CD8-positive, alpha-beta T cell (primary cell): ENCODE measurements at regions of chr20 and their contacts with region 1.

Region 1: GRCh38 chr20:17504898-17505635 is 26.1 kb downstream of the BFSP1 start:
- DNase-seq: peak; percentile 13 to 84 (median 48)
- ATAC-seq: peak; percentile 72
- H3K4me3 ChIP-seq: peak overlapping the region; percentile 56 to 61
- H3K4me3 Mint-ChIP-seq: peak overlapping the region; percentile 89
- H3K27ac ChIP-seq: peak overlapping the region in 1 of 2 experiments; percentile 64
- H3K27ac Mint-ChIP-seq: peak overlapping the region; percentile 89
- H3K4me1 ChIP-seq: peaks cover 24% of the 10 kb centered on the region
- H3K4me1 Mint-ChIP-seq: peaks cover 36% of the 10 kb centered on the region
- H3K27me3 ChIP-seq: no peaks in the 10 kb centered on the region
- H3K27me3 Mint-ChIP-seq: no peaks in the 10 kb centered on the region
- CTCF ChIP-seq: peak; percentile 84

Region 2: DNA sequence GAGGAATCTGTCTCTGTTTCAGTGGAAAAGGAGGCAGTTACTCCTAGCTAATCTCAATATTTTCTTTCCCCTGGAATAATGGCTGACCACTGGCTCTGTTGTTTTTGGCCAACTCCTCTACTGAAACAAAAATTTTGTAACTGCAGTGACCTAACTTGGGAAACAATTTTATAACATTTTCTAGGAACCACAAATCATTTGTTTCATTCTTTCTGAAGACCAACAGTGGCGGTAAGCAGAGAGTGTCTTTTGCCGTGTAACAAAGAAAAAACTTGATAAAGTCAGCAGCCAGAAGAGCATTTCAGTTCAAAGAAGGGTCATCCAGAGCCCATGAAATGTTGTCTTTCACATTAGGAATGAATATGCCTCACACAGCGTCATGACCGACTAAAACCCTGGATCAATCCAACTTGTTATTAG is 37.9 kb after region 1 on chr20:
- CTCF ChIA-PET with region 1: interaction called, 10 read pairs
- POLR2A ChIA-PET with region 1: no interaction called
- intact Hi-C with region 1: no loop called
- DNase-seq: no peak
- ATAC-seq: no peak
- H3K4me3 ChIP-seq: no peak overlapping the region
- H3K4me3 Mint-ChIP-seq: no peak overlapping the region
- H3K27ac ChIP-seq: no peak overlapping the region
- H3K27ac Mint-ChIP-seq: no peak overlapping the region
- H3K4me1 ChIP-seq: no peaks in the 10 kb centered on the region
- H3K4me1 Mint-ChIP-seq: no peaks in the 10 kb centered on the region
- H3K27me3 ChIP-seq: no peaks in the 10 kb centered on the region
- H3K27me3 Mint-ChIP-seq: peaks cover 16% of the 10 kb centered on the region
- CTCF ChIP-seq: no peak

Region 3: DNA sequence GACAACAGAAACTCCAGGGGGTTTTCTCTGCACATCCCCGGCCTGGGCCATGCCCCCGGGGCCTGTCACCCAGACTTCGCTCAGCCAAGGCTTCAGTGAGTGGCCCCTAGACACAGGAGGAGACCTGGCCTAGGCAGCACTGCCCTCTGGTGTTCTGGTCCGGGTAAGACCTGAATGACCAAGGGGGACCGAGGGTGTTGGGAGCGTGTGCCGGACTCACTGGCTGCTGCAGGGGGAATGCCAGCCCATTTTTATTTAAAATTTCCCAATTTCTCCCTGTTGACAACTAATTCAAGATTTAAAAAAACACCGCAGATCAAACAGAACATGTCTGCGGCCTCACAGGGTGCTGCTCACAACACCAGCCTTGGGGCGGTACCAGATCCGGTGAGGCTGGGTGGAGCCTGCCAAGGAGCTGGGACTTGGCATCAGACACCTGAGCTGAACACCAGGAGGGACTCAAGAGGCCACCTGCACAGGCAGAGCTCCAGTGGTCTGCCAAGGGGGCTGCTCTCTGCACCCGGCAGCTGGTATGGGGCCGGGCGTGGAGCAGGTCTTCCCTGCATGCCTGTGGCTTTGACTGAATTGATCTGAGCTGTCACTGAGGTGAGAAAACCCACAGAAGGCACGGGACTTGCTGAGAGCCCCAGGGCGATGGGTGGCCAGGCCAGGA is 112.6 kb after region 1 on chr20:
- CTCF ChIA-PET with region 1: interaction called, 16 read pairs
- POLR2A ChIA-PET with region 1: no interaction called
- intact Hi-C with region 1: loop called (anchors 1 kb)
- DNase-seq: peak in 7 of 9 experiments; percentile 25 to 67 (median 58)
- ATAC-seq: peak; percentile 55
- H3K4me3 ChIP-seq: no peak overlapping the region
- H3K4me3 Mint-ChIP-seq: no peak overlapping the region
- H3K27ac ChIP-seq: no peak overlapping the region
- H3K27ac Mint-ChIP-seq: no peak overlapping the region
- H3K4me1 ChIP-seq: peaks cover 4% of the 10 kb centered on the region
- H3K4me1 Mint-ChIP-seq: peaks cover 7% of the 10 kb centered on the region
- H3K27me3 ChIP-seq: no peaks in the 10 kb centered on the region
- H3K27me3 Mint-ChIP-seq: no peaks in the 10 kb centered on the region
- CTCF ChIP-seq: peak; percentile 58

Region 4: GRCh38 chr20:17938871-17939619 is 434.0 kb after region 1 on chr20:
- CTCF ChIA-PET with region 1: interaction called, 9 read pairs
- POLR2A ChIA-PET with region 1: interaction called, 3 read pairs
- intact Hi-C with region 1: loop called (anchors 1 to 2 kb)
- DNase-seq: peak; percentile 17 to 81 (median 57)
- ATAC-seq: peak; percentile 95
- H3K4me3 ChIP-seq: no peak overlapping the region
- H3K4me3 Mint-ChIP-seq: peak overlapping the region; percentile 50
- H3K27ac ChIP-seq: no peak overlapping the region
- H3K27ac Mint-ChIP-seq: peak overlapping the region; percentile 71
- H3K4me1 ChIP-seq: peaks cover 12% of the 10 kb centered on the region
- H3K4me1 Mint-ChIP-seq: peaks cover 16% of the 10 kb centered on the region
- H3K27me3 ChIP-seq: no peaks in the 10 kb centered on the region
- H3K27me3 Mint-ChIP-seq: no peaks in the 10 kb centered on the region
- CTCF ChIP-seq: peak; percentile 87